MCF 10A (cell line): ENCODE measurements at regions of chrX and their contacts with region 1.

Region 1: DNA sequence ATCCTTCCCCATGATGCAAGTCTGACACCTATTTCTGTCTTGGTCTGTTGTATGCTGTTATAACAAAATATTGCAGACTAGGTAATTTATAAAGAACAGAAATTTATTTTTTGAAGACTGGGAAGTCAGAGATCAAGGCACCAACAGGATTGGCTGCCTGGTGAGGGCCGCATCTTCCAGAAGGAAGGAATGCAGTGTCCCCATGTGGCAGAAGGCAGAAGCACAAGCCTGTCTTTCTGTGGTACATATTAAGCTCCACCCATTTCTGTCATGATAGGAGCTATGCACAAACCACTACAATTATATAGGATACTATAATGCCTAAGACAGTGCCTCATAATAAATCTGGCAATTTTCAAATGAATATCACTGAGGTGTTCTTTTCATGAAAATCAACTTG is 502.3 kb upstream of the DIAPH2 start:
- DNase-seq: peak; percentile 64
- H3K4me3 Mint-ChIP-seq: no peak overlapping the region
- H3K27ac Mint-ChIP-seq: no peak overlapping the region
- H3K4me1 Mint-ChIP-seq: peaks cover 8% of the 10 kb centered on the region
- H3K27me3 Mint-ChIP-seq: no peaks in the 10 kb centered on the region
- CTCF ChIP-seq: peak; percentile 57

Region 2: GRCh38 chrX:95056901-95057300 is 1125.5 kb before region 1 on chrX:
- CTCF ChIA-PET with region 1: no interaction called
- POLR2A ChIA-PET with region 1: no interaction called
- intact Hi-C with region 1: loop called (anchors 2 kb)
- DNase-seq: peak; percentile 54
- H3K4me3 Mint-ChIP-seq: no peak overlapping the region
- H3K27ac Mint-ChIP-seq: no peak overlapping the region
- H3K4me1 Mint-ChIP-seq: peaks cover 10% of the 10 kb centered on the region
- H3K27me3 Mint-ChIP-seq: peaks cover 45% of the 10 kb centered on the region
- CTCF ChIP-seq: peak; percentile 33

Region 3: DNA sequence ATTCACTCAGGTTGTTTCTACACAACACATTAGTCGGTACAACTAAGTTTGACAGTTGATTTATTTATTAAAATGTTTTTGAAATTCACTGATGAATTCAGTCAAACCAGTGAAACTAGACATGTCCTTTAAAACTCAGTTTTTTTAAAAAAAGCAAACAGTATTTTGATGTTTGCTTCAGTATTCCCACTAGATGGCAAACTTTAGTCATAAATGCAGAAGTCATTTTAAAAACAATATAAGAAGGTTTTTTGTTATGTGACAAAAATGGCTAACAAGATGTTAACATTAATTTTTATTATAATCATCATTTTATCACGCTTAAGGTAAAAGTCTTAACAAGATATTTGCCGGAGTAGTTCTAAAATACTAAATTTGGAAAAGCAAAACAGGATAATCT is 835.5 kb before region 1 on chrX:
- CTCF ChIA-PET with region 1: interaction called, 5 read pairs
- POLR2A ChIA-PET with region 1: no interaction called
- intact Hi-C with region 1: loop called (anchors 1 kb)
- DNase-seq: peak; percentile 20
- H3K4me3 Mint-ChIP-seq: no peak overlapping the region
- H3K27ac Mint-ChIP-seq: no peak overlapping the region
- H3K4me1 Mint-ChIP-seq: no peaks in the 10 kb centered on the region
- H3K27me3 Mint-ChIP-seq: peaks cover 11% of the 10 kb centered on the region
- CTCF ChIP-seq: peak; percentile 31

Region 4: GRCh38 chrX:95640226-95640625 is 542.1 kb before region 1 on chrX:
- CTCF ChIA-PET with region 1: no interaction called
- POLR2A ChIA-PET with region 1: no interaction called
- intact Hi-C with region 1: no loop called
- DNase-seq: peak; percentile 13
- H3K4me3 Mint-ChIP-seq: no peak overlapping the region
- H3K27ac Mint-ChIP-seq: no peak overlapping the region
- H3K4me1 Mint-ChIP-seq: peaks cover 6% of the 10 kb centered on the region
- H3K27me3 Mint-ChIP-seq: no peaks in the 10 kb centered on the region
- CTCF ChIP-seq: no peak

Region 5: GRCh38 chrX:95764972-95765451 is 417.4 kb before region 1 on chrX:
- CTCF ChIA-PET with region 1: interaction called, 38 read pairs
- POLR2A ChIA-PET with region 1: interaction called, 4 read pairs
- intact Hi-C with region 1: loop called (anchors 1 kb)
- DNase-seq: peak; percentile 67
- H3K4me3 Mint-ChIP-seq: no peak overlapping the region
- H3K27ac Mint-ChIP-seq: no peak overlapping the region
- H3K4me1 Mint-ChIP-seq: no peaks in the 10 kb centered on the region
- H3K27me3 Mint-ChIP-seq: peaks cover 6% of the 10 kb centered on the region
- CTCF ChIP-seq: peak; percentile 48

Region 6: GRCh38 chrX:95835223-95835622 is 347.1 kb before region 1 on chrX:
- CTCF ChIA-PET with region 1: no interaction called
- POLR2A ChIA-PET with region 1: no interaction called
- intact Hi-C with region 1: no loop called
- DNase-seq: no peak
- H3K4me3 Mint-ChIP-seq: no peak overlapping the region
- H3K27ac Mint-ChIP-seq: no peak overlapping the region
- H3K4me1 Mint-ChIP-seq: no peaks in the 10 kb centered on the region
- H3K27me3 Mint-ChIP-seq: no peaks in the 10 kb centered on the region
- CTCF ChIP-seq: no peak

Region 7: GRCh38 chrX:95903490-95903889 is 278.9 kb before region 1 on chrX:
- CTCF ChIA-PET with region 1: interaction called, 5 read pairs
- POLR2A ChIA-PET with region 1: no interaction called
- intact Hi-C with region 1: loop called (anchors 5 kb)
- DNase-seq: peak; percentile 14
- H3K4me3 Mint-ChIP-seq: no peak overlapping the region
- H3K27ac Mint-ChIP-seq: no peak overlapping the region
- H3K4me1 Mint-ChIP-seq: no peaks in the 10 kb centered on the region
- H3K27me3 Mint-ChIP-seq: peaks cover 30% of the 10 kb centered on the region
- CTCF ChIP-seq: no peak